Left colon (tissue), 2 donors: ENCODE measurements at regions of chrX and their contacts with region 1.

Region 1: DNA sequence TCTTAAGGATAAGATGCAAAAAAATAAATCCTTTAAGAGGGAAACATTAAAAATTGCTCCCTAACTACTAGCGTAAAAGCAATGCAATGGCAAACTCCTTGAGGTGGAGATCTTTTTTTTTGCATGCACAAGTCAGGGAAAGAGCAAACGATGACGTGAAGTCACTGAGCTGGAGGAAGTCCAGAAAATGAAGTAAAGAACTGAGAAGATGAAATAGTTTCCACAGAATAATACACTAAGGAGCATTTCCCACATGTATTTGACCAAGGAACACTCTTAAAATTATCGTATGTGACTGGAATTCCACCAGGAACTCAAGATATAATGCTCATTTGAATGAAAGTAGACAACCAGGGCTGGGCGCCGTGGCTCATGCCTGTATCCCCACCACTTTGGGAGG is 21.0 kb upstream of the DOCK11 start:
- DNase-seq: no peak
- ATAC-seq: no peak

Region 2: GRCh38 chrX:117568238-117568637 is 906.3 kb before region 1 on chrX:
- intact Hi-C with region 1: no loop called
- DNase-seq: no peak
- ATAC-seq: peak; percentile 40

Region 3: GRCh38 chrX:118088084-118088483 is 386.5 kb before region 1 on chrX:
- intact Hi-C with region 1: no loop called
- DNase-seq: no peak
- ATAC-seq: peak; percentile 85

Region 4: DNA sequence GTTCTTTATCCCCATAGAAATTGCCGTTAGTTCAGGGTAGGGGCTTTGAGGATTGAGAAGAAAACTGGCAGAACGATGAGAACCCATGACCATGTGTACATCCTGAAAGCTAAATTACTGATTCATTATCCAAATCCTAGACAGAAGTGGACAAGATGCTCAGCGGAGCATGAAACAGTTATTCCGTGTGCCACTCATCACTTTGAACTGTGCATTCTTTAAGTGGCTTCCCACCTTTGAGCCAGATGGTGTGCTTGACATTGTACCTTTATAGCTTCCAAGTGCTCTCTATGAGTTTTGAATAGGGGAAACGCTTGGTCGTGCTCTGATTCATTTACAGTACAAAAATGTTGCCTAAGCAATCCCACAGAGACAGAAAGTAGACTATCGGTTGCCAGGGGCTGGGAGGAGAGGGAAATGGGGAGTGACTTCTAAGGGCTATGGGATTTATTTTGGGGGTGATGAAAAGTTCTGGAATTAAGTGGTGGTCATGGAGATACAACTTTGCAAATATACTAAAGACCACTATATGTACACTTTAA is 121.0 kb after region 1 on chrX:
- intact Hi-C with region 1: loop called in 1 of 2 experiments (anchors 10 kb)
- DNase-seq: no peak
- ATAC-seq: no peak